Activated T-helper 2 cell treated with anti-CD3 and anti-CD28 coated beads, Interferon-gamma antibody, Interleukin-2, Interleukin-4, amounts not matched to agents 10 μg/mL and 5 μg/mL and 100 μg/mL, durations not matched to agents 14 hours and 24 hours and 36 hours (primary cell): ENCODE measurements at regions of chr19 and their contacts with region 1.

Region 1: DNA sequence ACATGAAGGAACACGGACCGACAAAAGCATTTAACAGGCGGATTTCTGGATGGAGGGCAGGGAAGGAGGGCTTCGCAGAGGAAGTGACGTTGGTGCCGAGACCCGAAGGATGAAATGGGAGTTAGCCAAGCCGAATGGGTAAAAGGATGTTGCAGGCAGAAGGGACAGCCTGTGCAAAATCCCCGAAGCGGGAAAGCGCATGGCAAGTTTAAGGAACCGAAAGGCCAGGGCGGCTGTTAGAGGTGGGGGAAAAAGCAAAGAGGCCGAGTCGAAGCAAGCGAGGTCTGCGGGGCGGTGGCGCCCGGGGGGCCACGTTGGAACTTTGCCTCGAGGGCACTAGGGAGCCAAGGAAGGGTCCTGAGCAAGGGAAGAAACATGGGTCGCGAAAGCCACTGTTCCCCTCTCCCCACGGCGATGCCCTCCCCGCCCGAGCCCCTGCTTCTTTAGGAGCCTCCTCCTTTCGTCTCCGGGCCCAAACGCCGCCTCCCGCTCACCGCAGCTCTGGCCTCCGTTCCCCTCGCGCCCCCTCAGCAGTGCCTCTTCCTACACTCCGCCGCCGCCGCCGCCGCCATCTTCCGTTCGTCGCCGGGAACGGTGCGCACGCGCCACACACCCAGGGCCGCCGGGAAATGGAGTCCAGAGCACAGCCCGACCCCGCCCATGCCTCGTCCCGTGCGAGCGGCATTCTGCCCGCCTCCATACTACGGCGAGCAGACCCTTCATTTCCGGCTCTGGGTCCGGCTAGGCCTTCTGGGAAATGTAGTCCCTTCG is at the start of gene SYMPK:
- DNase-seq: peak; percentile 99
- H3K4me3 Mint-ChIP-seq: peak within 1 kb of the TSS; percentile 90
- H3K27ac Mint-ChIP-seq: peak within 1 kb of the TSS; percentile 98
- H3K4me1 Mint-ChIP-seq: peaks cover 23% of the 10 kb centered on the region
- H3K27me3 Mint-ChIP-seq: peaks cover 28% of the 10 kb centered on the region
- total RNA-seq, gene SYMPK: 121 and 131 TPM in 2 replicates

Region 2: GRCh38 chr19:45584332-45585157 is 278.2 kb before region 1 on chr19 and contains the start of gene OPA3:
- intact Hi-C with region 1: no loop called
- DNase-seq: peak; percentile 98
- H3K4me3 Mint-ChIP-seq: peak within 1 kb of the TSS; percentile 89
- H3K27ac Mint-ChIP-seq: peak within 1 kb of the TSS; percentile 97
- H3K4me1 Mint-ChIP-seq: peaks cover 9% of the 10 kb centered on the region
- H3K27me3 Mint-ChIP-seq: peaks cover under 1% of the 10 kb centered on the region
- total RNA-seq, gene OPA3: 15.2 and 15.9 TPM in 2 replicates

Region 3: DNA sequence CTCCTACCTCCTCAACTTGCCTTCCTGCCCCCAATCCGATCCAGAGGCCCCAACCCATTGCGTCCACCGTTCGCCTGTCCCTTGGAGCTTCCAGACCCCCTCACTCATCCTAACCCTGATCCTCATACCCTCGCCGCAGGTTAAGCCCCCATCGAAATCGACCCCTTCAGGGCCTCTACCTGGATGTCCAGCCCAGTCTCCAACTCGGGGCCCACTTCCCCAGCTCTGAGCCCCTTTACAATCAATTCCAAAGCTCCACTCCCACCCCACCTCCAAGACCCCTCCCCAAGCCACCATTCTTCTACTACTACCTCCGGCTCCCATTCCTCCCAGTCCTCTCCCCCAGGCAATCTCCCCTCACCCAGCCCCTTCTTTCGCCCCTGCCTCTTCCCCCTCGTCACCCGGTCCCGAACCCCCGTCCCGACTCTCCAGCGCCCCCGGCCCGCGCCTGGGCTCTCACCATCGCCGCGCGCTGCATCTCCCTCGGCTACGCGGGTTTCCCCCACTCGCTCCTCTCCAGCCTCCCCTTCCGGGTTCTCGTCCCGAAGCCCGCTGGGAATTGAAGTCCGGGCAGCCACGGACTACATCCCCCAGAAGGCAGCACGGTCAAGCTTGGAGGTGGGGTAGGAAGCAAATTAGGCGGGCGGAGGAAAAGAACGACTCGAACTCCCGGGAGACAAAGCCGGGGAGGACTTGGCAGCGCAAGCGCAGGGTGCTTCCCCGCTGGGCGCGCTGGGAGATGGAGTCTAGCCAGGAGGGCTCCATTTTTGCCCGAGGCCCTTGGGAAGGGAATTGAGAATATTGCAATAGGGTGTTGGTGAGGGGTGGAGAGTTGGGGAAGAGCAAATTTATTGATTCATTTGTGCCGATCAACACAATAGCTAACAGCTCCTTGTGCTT is 132.1 kb before region 1 on chr19 and contains the start of gene FBXO46:
- intact Hi-C with region 1: loop called (anchors 5 kb)
- DNase-seq: peak; percentile 93
- H3K4me3 Mint-ChIP-seq: peak within 1 kb of the TSS; percentile 100
- H3K27ac Mint-ChIP-seq: peak within 1 kb of the TSS; percentile 92
- H3K4me1 Mint-ChIP-seq: peaks cover 18% of the 10 kb centered on the region
- H3K27me3 Mint-ChIP-seq: no peaks in the 10 kb centered on the region
- total RNA-seq, gene FBXO46: 34.4 and 38.9 TPM in 2 replicates

Region 4: DNA sequence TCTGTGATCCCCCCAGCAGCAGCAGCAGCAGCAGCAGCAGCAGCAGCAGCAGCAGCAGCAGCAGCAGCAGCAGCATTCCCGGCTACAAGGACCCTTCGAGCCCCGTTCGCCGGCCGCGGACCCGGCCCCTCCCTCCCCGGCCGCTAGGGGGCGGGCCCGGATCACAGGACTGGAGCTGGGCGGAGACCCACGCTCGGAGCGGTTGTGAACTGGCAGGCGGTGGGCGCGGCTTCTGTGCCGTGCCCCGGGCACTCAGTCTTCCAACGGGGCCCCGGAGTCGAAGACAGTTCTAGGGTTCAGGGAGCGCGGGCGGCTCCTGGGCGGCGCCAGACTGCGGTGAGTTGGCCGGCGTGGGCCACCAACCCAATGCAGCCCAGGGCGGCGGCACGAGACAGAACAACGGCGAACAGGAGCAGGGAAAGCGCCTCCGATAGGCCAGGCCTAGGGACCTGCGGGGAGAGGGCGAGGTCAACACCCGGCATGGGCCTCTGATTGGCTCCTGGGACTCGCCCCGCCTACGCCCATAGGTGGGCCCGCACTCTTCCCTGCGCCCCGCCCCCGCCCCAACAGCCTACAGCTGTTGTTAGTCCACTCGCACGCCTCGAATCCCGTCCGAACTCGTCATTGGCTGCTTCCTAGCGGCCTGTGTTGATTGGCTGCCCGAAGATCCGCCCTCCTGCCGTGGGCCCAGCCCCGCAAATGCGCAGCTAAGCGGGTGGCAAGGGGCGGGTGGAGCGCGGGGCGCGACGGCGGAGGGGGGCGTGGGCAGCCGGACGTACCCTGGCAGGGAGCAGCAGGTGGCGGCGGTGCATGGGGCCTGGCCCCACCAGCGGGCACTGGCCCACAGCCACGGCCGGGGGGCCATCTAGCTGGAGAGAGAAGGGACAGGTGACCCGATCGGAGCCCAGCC is 92.3 kb before region 1 on chr19:
- intact Hi-C with region 1: loop called (anchors 1 kb)
- DNase-seq: peak; percentile 86
- H3K4me3 Mint-ChIP-seq: peak overlapping the region; percentile 86
- H3K27ac Mint-ChIP-seq: no peak overlapping the region
- H3K4me1 Mint-ChIP-seq: peaks cover 8% of the 10 kb centered on the region
- H3K27me3 Mint-ChIP-seq: peaks cover 12% of the 10 kb centered on the region

Region 5: DNA sequence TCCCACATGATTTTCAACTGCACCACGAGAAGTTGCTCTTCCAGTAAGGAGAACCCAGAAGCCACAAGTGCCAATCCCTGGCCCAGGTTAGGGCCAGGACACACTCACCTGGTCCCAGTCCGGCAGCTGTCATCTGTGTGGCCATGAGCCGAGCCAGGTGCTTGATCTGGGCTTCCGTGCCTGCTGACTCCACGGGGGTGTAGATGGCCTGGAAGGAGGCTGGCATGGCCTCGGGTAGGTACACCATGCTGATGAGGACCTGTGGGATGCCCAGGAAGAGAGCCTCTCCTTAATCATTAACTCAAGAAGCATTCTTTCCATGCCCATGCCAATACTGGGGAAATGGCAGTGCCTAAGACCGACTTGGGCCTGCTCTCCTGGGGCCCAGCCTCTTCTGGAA is 27.8 kb before region 1 on chr19:
- intact Hi-C with region 1: no loop called
- DNase-seq: no peak
- H3K4me3 Mint-ChIP-seq: no peak overlapping the region
- H3K27ac Mint-ChIP-seq: no peak overlapping the region
- H3K4me1 Mint-ChIP-seq: no peaks in the 10 kb centered on the region
- H3K27me3 Mint-ChIP-seq: no peaks in the 10 kb centered on the region

Region 6: DNA sequence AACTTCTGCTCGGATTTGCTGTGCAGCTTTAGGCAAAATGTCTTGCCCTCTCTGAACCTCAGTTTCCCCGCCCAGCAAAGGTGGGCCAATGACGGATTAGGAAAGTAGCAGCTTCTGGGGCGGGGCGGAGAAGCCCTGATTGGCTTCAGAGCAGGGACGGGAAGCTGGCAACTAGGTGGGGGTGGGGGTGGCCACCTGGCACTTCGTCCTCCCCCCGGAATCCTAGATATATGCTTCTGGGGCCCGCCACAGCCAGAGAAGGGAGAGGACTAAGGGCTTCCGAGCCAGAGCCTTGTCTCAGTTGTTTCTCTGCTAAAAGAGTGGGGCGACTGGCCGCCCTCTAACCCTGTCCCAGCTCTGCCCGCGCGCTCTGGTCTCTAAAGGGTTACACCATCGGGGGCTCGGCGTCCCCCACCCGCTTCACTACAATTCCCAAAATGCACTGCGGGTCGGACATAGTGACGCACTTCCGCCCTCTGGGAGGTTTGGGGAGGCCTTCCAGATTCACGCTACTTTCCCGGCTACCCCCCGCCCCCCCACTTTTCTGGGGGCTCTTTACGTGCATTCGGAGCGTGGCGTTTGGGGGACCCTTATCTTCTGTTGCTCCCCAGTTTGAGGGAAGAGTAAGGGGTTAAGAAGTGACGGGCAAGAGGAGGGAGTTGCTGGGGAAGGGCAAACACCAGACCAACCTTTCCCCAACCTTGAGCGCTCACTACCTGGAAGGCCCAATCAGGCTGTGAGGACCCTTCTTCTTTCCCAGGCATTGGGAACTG is 23.9 kb after region 1 on chr19:
- intact Hi-C with region 1: loop called (anchors 1 kb)
- DNase-seq: peak; percentile 85
- H3K4me3 Mint-ChIP-seq: peak overlapping the region; percentile 88
- H3K27ac Mint-ChIP-seq: peak overlapping the region; percentile 88
- H3K4me1 Mint-ChIP-seq: peaks cover 13% of the 10 kb centered on the region
- H3K27me3 Mint-ChIP-seq: no peaks in the 10 kb centered on the region

Region 7: DNA sequence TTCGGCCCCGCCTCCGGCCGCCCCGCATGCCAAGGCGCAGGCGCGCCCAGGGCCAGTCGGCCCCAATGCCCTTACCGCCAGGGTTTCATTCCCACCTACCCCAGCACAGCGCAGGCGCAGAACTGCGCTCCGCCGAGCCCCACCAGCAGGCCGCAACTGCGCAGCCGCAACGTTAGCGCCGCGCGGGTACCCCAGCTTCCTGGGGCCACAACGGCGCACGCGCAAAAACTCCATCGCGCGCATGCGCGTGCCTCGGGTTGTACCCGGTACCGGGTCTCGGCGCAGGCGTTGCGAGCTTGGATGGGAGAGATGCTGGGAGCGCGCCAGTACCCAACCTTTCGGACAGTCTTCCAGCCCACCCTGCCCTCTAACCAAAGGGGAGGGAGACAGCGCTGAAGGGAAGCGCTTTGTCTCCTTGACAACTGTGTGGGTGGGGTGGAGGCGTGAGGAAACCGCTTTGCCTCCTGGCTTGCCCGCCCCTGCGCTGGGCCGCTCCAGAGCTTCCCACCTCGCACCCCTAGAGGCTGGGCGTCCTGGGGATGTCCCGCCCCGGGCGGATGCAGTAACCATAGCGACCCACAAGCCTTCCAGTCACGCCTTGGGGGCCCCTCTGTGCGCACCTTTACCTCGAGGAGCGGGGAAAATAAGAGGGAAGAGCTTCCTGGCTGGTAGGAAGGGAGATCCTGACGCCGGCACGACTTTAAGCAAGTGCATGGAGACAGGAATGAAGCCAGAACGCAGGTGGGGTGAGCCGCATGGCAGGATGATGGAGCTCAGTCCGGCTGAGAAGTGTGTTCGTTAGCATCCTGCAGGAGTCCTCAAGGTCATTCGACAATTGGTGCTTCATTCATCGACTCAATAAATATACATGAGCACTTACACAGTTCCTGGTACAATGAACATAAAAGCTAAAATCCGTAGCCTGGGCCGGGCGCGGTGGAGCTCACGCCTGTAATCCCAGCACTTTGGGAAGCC is 40.2 kb after region 1 on chr19:
- intact Hi-C with region 1: loop called (anchors 1 kb)
- DNase-seq: peak; percentile 100
- H3K4me3 Mint-ChIP-seq: peak overlapping the region; percentile 93
- H3K27ac Mint-ChIP-seq: peak overlapping the region; percentile 69
- H3K4me1 Mint-ChIP-seq: peaks cover 8% of the 10 kb centered on the region
- H3K27me3 Mint-ChIP-seq: no peaks in the 10 kb centered on the region

Region 8: GRCh38 chr19:45994989-45995714 is 132.4 kb after region 1 on chr19 and contains the start of gene CCDC61:
- intact Hi-C with region 1: loop called (anchors 1 kb)
- DNase-seq: peak; percentile 96
- H3K4me3 Mint-ChIP-seq: no peak within 1 kb of the TSS
- H3K27ac Mint-ChIP-seq: peak within 1 kb of the TSS; percentile 29
- H3K4me1 Mint-ChIP-seq: peaks cover 12% of the 10 kb centered on the region
- H3K27me3 Mint-ChIP-seq: peaks cover 5% of the 10 kb centered on the region
- total RNA-seq, gene CCDC61: 25.3 and 31.2 TPM in 2 replicates